G401 (cell line): ENCODE measurements at regions of chr3 and their contacts with region 1.

Region 1: DNA sequence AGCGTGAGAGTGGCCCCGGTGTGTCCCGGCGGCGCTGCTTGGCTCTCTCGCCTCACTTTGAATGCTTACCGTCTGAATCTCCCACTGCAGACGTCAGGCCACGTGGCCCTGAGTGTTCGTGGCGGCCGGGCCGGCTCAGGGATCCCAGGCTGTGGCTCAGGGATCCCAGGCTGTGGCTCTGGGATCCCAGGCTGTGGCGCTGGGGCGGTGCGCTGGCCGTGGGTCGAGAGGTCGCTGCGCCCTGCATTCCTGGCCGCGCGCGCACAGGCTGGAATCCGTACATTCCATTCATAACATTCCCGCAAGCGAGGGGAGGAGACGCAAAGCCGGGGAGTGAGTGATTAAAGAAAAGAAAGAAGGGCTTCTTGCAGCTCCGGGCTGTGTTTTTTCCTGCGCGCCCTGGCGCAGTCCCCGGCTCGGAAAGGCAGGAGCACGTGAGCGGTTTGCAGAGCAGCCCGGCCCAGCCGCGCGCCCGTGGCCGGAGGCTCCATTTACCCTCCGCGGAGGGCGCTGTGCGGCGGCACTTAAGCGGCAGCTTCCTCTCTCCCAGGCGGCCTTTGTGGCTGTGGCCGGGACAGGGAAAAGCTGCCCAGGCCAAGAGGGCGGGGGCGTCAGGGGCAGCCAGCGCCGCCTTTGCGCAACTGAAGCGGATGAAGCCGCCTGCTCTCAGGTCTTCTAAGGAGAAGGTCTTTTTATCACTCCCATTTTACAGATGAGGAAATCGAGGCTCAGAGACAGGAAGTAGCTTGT is 87.0 kb upstream of the ALDH1L1 start:
- DNase-seq: peak; percentile 55

Region 2: GRCh38 chr3:126170073-126170777 is 97.2 kb before region 1 on chr3:
- in situ Hi-C with region 1: no loop called
- DNase-seq: no peak

Region 3: DNA sequence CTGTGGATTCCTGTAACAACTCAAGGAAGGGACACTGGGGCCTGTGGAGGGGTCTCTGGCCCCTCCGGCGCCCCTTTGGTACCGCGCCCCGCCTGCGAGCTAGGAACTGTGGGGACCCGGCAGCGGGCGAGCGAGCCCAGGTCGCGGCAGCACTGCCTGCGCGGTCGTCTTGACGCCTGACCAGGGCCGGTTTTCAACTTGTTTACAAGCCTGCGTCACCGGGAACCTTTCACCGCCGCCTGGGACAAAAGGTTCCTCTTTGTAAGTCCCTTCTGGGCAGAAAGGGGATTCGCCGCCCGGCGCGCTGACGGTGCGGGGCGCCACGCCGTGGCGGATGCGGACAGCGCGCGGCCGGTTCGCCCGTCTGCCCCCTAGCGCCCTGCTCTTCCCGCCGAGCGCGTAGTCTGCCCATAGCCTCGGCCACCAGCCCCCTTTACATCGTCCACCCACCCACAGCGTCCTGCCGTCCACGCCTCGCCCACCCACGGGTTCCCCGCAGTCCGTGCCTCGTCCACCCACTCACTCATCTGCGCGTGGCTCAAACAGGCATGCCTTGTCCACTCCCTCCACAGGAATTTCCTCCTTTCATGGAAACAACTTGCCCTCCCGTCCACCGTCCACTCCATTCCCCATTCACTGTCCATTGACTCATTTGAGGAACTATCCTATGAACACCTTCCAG is 121.9 kb after region 1 on chr3:
- in situ Hi-C with region 1: loop called (anchors 25 kb)
- DNase-seq: peak; percentile 80